PC-3 (cell line): ENCODE measurements at regions of chr17 and their contacts with region 1.

Region 1: DNA sequence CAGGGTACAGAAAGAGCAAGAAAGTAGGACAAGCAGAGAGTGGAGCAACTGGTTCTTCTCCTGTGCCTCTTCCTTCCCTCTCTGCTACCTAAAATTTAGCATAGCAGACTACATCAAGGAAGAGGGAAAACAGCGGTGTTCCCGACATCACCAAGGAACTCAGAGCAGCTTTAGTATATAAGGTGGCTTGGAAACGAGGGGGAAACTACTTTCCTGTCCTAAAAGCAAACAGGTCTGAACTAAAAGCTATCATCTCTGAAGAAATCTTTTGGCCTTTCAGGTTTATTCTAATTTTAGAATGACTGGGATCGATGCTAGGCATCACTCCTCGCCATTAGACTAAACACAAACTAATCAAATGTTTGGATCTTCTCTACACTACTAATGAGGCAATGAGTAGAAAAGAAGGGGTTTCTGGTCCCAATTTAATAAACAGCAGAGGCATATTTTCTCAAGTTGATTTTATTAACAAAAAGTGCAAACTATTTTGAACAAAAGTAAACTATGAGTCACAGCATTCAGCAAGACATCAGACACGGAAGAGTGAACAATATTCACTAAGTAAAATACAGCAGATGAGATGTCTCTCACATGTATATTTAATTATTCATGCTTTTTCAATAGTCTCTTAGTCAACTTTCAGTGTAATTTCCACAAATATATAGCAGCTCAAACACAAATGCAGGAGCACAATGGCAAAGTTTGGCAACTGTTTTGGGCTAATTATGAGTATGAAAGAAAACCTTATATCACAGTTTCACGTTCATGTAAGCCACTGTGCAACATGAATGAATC is 108.7 kb downstream of the TRIM37 start:
- DNase-seq: peak; percentile 47
- ATAC-seq: peak; percentile 77
- H3K4me3 ChIP-seq: no peak overlapping the region
- H3K27ac ChIP-seq: peak overlapping the region; percentile 15; the same call in 1 of the 2 replicates
- H3K4me1 ChIP-seq: peaks cover 22% of the 10 kb centered on the region
- H3K27me3 ChIP-seq: no peaks in the 10 kb centered on the region
- CTCF ChIP-seq: no peak

Region 2: GRCh38 chr17:58307468-58308172 is 690.3 kb before region 1 on chr17:
- CTCF ChIA-PET with region 1: no interaction called
- POLR2A ChIA-PET with region 1: interaction called, 10 read pairs
- intact Hi-C with region 1: no loop called
- DNase-seq: no peak
- ATAC-seq: no peak
- H3K4me3 ChIP-seq: no peak overlapping the region
- H3K27ac ChIP-seq: no peak overlapping the region
- H3K4me1 ChIP-seq: no peaks in the 10 kb centered on the region
- H3K27me3 ChIP-seq: no peaks in the 10 kb centered on the region
- CTCF ChIP-seq: no peak

Region 3: DNA sequence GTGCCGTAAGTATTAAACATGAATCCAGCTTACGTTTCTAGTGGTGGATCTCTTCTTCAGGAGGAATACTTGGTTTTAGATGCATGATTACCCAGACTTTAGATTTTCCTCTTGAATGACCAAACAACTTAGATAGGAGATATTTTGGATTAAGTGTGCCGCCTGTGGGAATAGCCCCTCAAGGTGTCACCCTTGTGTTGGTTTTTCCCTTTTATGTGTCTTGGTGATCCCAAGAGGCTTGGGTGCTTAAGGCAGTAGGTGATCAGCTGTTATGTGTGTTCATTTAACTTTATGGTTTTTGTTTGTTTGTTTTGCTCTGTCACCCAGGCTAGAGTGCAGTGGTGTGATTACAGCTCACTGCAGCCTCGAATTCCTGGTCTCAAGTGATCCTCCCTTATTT is 127.2 kb before region 1 on chr17:
- CTCF ChIA-PET with region 1: no interaction called
- POLR2A ChIA-PET with region 1: no interaction called
- intact Hi-C with region 1: loop called (anchors 5 kb)
- DNase-seq: peak; percentile 23
- ATAC-seq: peak; percentile 45; the same call in 1 of the 2 replicates
- H3K4me3 ChIP-seq: no peak overlapping the region
- H3K27ac ChIP-seq: no peak overlapping the region
- H3K4me1 ChIP-seq: no peaks in the 10 kb centered on the region
- H3K27me3 ChIP-seq: peaks cover 48% of the 10 kb centered on the region
- CTCF ChIP-seq: peak; percentile 30; the same call in 1 of the 2 replicates

Region 4: DNA sequence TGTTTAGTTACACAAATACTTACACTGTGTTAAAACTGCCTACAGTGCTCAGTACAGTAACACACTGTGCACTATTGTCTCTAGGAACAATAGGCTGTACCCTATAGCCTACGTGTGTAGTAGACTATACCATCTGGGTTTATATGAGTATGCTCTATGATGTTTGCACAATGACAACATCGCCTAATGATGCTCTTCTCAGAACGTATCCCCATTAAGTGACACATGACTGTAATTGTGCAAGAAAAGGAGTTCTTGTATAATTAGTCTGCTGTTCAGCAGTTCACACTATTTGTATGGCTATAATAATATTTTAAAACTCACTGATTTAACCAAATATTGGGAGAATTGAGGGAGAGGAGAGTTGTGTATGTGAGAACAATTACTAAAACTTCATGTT is 65.0 kb before region 1 on chr17:
- CTCF ChIA-PET with region 1: no interaction called
- POLR2A ChIA-PET with region 1: no interaction called
- intact Hi-C with region 1: no loop called
- DNase-seq: peak; percentile 9
- ATAC-seq: peak; percentile 43
- H3K4me3 ChIP-seq: no peak overlapping the region
- H3K27ac ChIP-seq: no peak overlapping the region
- H3K4me1 ChIP-seq: no peaks in the 10 kb centered on the region
- H3K27me3 ChIP-seq: peaks cover 11% of the 10 kb centered on the region; the same call in 1 of the 2 replicates
- CTCF ChIP-seq: no peak

Region 5: DNA sequence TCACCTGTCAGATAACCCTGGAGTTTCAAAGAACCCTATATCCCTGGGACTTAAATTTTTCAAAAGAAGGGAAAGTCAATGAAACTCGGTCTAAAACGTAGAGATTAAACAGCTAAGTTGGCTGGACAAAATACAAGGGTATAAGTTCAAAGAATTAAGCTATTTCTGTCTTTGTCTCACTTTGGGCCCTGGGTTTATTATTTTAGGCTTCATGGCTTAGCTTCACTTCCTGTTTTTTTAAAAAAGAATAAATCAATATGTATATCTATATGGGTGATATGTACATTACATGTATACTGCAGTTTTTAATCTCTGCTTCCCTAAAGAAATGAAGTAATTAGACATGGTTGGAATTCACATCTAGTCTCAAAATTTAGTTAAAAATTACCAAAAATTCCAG is 23.6 kb before region 1 on chr17:
- CTCF ChIA-PET with region 1: no interaction called
- POLR2A ChIA-PET with region 1: no interaction called
- intact Hi-C with region 1: no loop called
- DNase-seq: no peak
- ATAC-seq: no peak
- H3K4me3 ChIP-seq: no peak overlapping the region
- H3K27ac ChIP-seq: no peak overlapping the region
- H3K4me1 ChIP-seq: no peaks in the 10 kb centered on the region
- H3K27me3 ChIP-seq: no peaks in the 10 kb centered on the region
- CTCF ChIP-seq: no peak